ENCODE measurements at regions of chr11 and their contacts with region 1.

Region 1: DNA sequence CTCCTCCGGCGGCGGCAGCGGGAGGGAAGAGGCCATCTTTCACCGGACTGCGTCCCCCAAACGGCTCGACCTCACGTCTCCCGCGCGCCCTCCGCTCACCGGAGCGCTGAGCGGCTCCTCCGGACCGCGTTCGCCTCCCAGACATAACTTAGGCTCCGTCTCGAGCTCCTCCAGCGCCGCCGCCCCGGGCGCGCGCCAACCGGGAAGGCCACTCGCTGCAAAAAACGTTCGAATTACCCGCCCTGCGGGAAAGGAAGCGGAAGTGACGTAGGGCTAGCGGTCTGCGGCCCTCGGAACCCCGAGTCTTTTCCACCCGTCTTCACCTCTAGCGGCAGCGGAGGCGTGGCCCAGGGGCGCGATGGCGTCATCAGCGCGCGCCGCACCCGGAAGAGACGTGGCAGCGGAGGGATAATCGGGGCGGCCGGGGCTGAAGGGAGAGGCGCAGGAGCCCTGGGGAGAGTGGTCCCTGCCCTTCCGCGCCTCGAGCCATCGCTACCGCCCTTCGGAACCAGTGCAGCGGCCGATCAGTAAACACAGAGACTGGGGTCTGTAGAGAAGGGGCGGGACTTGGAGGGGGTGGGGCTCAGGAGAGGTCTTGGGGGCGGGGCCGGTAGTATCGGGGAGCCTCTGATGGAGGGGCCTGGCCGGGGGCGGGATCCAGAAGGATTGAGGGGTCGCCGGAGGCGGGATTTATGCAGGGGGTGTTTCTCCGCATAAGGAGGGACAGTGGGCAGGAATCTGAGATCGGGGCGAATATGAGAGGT is at the starts of genes CDCA5 and ZFPL1:
- DNase-seq: peak; percentile 95 to 99 (median 96)
- H3K4me3 ChIP-seq: peak within 1 kb of the TSS; percentile 54 to 100 (median 82)
- H3K27ac ChIP-seq: peak within 1 kb of the TSS; percentile 31 to 99 (median 88)
- H3K27me3 ChIP-seq: no peaks in the 10 kb centered on the region
- CTCF ChIP-seq: peak in 31 of 56 donors; percentile 5 to 60 (median 33)
- total RNA-seq, gene CDCA5: 1.3 to 8.1 (median 4.6) TPM
- total RNA-seq, gene ZFPL1: 27.8 to 62.4 (median 38.9) TPM

Region 2: DNA sequence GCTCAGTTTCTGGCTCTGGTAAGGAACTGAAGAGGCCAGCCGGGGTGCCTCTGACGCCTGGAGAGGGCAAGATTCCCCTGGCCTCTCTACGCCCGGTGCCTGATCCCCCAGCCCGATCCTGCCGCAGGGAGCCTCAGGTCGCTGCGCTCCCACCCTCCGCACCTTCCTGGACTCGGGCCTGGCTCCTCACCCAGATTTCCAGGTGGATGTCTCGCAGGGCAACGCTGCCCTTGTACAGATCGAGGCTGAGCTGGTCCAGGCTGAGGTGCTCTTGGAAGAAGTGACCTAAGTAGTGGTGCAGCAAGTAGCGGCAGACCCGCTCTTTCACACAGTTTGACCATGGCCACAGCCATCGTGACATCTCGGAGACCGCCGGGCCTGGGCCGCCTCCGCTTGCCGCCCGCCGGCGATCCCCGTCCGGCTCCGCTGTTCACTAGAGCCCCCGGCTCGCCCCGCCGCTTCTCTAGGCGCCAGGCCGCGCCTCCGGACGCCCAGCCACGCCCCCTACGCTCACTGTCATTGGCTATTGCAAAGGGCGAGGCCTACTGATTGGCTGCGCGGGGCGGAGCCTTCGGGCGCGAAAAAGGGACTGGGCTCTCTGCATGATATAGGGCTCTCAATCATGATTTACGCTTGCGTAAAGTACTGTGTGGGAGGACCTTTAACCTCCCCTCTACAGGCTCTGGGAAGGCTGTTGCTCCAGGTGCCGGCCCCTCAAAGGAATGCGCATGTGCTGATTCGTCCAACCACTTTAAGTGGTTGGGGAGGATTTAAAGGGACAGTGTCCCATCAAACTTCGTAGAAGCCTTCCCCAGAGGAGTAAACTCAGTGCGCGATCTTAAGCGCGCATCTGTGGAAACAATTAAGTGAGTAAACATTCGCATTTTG is 167.0 kb before region 1 on chr11 and contains the start of gene ATG2A:
- intact Hi-C with region 1: no loop called
- DNase-seq: peak; percentile 97 to 99 (median 99)
- H3K4me3 ChIP-seq: peak within 1 kb of the TSS; percentile 63 to 100 (median 93)
- H3K27ac ChIP-seq: peak within 1 kb of the TSS; percentile 49 to 96 (median 86)
- H3K27me3 ChIP-seq: no peaks in the 10 kb centered on the region
- CTCF ChIP-seq: peak in 25 of 56 donors; percentile 7 to 63 (median 26)
- total RNA-seq, gene ATG2A: 21.4 to 47.9 (median 34.8) TPM

Region 3: GRCh38 chr11:65040847-65041621 is 43.0 kb before region 1 on chr11 and contains the start of gene SAC3D1:
- intact Hi-C with region 1: loop called (anchors 5 kb)
- DNase-seq: peak; percentile 76 to 94 (median 90)
- H3K4me3 ChIP-seq: peak within 1 kb of the TSS; percentile 58 to 97 (median 84)
- H3K27ac ChIP-seq: peak within 1 kb of the TSS; percentile 64 to 97 (median 90)
- H3K27me3 ChIP-seq: no peaks in the 10 kb centered on the region
- CTCF ChIP-seq: peak in 26 of 56 donors; percentile 6 to 55 (median 28)
- total RNA-seq, gene SAC3D1: 6.7 to 14.9 (median 10.4) TPM

Region 4: GRCh38 chr11:65095974-65096806 is 12.2 kb after region 1 on chr11 and contains the start of gene VPS51:
- intact Hi-C with region 1: loop called in 1 of 2 experiments (anchors 1 kb)
- DNase-seq: peak; percentile 77 to 93 (median 89)
- H3K4me3 ChIP-seq: peak within 1 kb of the TSS; percentile 59 to 100 (median 86)
- H3K27ac ChIP-seq: peak within 1 kb of the TSS; percentile 77 to 98 (median 94)
- H3K27me3 ChIP-seq: no peaks in the 10 kb centered on the region
- CTCF ChIP-seq: peak in 40 of 56 donors; percentile 5 to 50 (median 20)
- total RNA-seq, gene VPS51: 97.3 to 182 (median 137) TPM

Measured in dorsolateral prefrontal cortex (tissue), 120 donors.